Motor neuron (in vitro differentiated cells): ENCODE measurements at regions of chr3 and their contacts with region 1.

Region 1: DNA sequence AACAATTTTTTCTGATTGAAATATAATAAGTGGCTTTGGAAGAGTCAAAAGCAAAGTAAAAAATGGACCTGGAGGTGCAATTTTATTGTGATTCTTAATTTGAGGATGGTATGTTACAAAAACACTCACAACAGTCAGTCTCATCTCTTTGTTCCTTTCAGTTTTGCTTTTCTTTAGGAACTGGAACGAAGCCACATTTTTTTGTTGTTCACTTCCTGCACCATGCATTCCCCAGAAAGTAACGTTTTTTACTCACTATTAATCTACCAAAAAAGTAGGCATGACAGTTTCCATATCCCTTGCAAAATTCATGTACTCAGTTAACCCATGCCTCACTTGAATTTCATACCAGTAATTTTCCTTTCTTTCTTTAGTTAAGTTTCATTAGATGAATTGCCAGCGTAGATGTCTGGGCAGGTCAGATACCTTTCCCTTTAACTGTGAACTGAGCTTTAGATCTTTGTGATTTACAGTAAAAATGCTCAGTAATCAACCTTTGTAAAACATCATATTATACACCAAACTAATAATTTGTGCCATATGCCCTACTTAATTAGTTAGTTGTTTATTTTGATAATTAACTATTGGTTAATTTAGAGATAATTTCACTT is 384.3 kb downstream of the ROBO1 start:
- ATAC-seq: peak in 3 of 8 experiments; percentile 27 to 60 (median 29)
- H3K4me3 ChIP-seq: no peak overlapping the region
- H3K27ac ChIP-seq: no peak overlapping the region
- H3K4me1 ChIP-seq: peaks cover 0 to 9% of the 10 kb centered on the region in 2 donors

Region 2: DNA sequence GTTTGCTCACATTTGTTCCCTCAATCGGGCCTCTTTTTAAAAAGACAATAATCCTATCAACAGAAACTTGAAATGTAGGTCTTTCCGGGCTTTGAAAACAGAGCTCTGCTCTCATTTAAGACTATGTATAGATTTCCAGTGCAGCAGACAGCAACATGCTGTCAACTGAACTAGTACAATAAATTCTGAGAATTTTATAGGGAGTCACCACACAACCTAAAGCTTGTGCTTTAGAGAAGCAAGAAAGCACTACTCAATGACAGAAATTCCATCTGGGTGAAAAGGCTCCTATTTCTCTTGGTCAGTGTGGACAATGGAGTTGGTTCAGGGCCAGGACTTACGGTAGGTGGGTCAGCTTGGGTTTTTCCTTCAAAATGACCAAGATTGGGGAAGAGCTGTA is 199.3 kb before region 1 on chr3:
- in situ Hi-C with region 1: no loop called
- ATAC-seq: peak in 2 of 8 experiments; percentile 32 to 58
- H3K4me3 ChIP-seq: no peak overlapping the region
- H3K27ac ChIP-seq: no peak overlapping the region
- H3K4me1 ChIP-seq: peaks cover 6 to 9% of the 10 kb centered on the region in 2 donors

Region 3: DNA sequence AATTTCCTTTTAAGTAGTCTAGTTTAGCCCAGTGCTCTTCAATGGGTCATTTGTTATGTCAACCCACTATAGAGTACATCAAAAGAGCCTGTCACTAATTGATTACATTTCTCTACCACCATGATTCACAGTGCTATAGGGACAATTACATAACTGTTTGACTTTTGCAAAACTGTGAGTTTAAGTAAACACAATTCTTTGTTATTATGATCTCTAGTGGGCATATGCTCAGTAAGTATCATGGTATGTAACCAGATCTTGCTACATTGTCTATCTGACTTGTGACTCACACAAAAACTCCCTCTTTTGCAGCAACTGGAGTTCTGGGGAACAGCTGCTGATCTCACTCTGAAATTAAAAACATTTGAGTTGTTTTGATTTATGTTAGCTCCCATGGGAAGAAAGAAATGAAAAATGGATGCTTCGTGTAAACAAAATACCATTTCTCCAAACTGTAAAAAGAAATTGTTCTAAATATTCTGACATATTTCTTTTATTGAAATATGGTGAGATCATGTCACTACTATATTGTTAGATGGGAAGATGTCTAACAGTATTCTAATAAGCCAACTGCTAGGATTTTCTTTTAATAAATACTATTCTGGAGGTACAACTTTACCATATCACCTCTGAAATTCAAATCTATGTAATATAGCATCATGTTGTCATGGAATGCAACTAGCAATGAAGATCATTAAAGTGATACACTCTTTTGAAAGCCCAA is 86.1 kb before region 1 on chr3:
- in situ Hi-C with region 1: no loop called
- ATAC-seq: peak; percentile 63 to 97 (median 92)
- H3K4me3 ChIP-seq: no peak overlapping the region
- H3K27ac ChIP-seq: no peak overlapping the region
- H3K4me1 ChIP-seq: peaks cover 6 to 10% of the 10 kb centered on the region in 2 donors

Region 4: GRCh38 chr3:79497447-79498111 is 114.1 kb after region 1 on chr3:
- in situ Hi-C with region 1: loop called in 2 of 9 experiments (anchors 25 kb)
- ATAC-seq: no peak
- H3K4me3 ChIP-seq: no peak overlapping the region
- H3K27ac ChIP-seq: no peak overlapping the region
- H3K4me1 ChIP-seq: no peaks in the 10 kb centered on the region